A673 (cell line): ENCODE measurements at regions of chr7 and their contacts with region 1.

Region 1: DNA sequence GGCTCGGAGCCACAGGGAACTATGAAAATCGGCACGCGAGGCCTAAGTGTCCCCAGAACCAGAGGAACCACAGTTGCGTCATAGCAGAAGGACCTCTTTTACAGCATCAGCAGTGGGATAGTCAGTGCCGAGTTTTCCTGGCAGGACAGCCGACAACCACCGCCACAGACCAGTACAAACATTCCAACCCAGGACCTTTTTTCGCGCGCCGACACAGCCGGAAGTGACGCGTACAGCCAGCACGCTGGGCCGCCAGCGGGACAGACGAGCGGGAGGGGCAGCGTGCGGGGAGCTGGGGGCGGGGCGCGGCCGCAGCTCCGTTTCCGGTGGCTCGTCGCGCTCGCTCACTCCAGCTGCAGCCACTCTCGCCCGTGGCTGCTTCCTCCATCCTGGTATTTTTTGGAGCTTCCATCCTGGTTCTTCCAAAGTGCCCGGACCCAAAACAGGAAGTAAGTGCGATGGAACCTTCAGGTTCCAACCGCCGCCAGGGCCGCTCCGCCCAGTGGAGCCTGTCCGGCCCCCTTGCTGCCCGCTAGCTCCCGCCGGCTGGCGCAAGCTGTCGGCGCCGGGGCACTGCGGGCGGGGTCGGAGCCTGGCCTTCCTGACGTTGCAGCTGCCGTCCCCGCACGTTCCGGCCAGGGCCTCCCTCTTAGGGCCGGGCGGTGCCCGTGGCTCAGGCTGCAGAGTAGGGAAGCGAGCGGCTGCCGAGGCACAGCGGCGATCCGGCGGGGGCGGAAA is at the start of gene DMTF1:
- DNase-seq: peak; percentile 96
- H3K4me3 ChIP-seq: peak within 1 kb of the TSS; percentile 89
- H3K27ac ChIP-seq: peak within 1 kb of the TSS; percentile 99
- H3K4me1 ChIP-seq: peaks cover 11% of the 10 kb centered on the region
- H3K27me3 ChIP-seq: no peaks in the 10 kb centered on the region
- CTCF ChIP-seq: no peak
- total RNA-seq, gene DMTF1: 90.5 and 94.3 TPM in 2 replicates

Region 2: DNA sequence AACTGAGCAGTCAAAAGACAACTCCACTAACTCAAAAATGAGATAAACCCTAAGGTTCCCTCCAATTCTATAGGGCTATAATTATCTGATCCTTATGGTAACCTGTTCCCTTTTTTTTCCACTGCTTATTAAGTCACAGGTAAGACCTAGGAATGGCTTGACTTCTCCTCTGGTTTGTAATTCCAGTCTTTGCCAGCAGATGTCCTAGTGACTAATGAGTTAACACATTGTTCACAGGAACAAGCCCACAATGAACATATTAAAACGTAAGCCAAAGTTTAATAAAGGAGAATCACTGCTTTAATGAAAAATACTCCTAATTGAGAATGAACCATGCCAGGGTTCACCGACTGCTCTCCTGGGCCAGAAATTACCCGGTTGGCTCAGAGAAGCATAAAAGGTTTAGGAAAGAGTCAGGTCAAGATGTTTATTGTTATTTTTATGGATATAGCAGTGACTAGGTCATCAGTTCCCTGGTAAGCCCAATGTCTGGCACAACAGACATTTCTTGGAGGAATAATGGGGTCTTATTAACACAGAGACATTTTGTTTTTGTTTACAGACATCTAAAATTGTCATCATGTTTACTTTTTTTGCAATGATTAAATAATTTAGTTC is 213.0 kb before region 1 on chr7:
- CTCF ChIA-PET with region 1: interaction called, 4 read pairs
- POLR2A ChIA-PET with region 1: no interaction called
- intact Hi-C with region 1: loop called (anchors 1 kb)
- DNase-seq: peak; percentile 66
- H3K4me3 ChIP-seq: no peak overlapping the region
- H3K27ac ChIP-seq: no peak overlapping the region
- H3K4me1 ChIP-seq: no peaks in the 10 kb centered on the region
- H3K27me3 ChIP-seq: peaks cover 12% of the 10 kb centered on the region
- CTCF ChIP-seq: peak; percentile 71

Region 3: DNA sequence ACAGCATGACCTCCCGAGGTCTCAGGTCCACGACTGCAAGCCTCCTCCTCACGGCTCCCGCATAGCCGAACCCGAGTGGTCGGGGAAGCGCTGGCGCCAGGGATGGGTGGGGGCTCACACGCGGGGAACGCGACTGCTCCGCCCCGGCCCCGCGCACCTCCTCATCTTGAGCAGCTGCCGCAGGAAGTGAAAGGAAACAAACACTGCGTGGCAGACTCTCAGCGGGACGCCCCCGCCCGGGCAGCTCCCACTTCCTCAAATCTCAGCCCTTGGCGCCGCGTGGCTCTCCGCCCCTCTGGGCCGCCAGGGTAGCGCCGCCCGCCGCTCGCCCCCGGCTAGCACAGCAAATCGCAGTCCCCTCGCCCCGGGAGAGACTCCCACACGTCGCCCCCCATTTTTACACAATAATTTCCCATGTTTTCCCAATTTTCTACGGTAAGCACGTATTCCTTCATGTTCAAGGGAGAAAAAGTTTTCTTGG is 67.3 kb after region 1 on chr7 and contains the start of gene TMEM243:
- CTCF ChIA-PET with region 1: interaction called, 4 read pairs
- POLR2A ChIA-PET with region 1: interaction called, 3 read pairs
- intact Hi-C with region 1: loop called (anchors 2 kb)
- DNase-seq: peak; percentile 89
- H3K4me3 ChIP-seq: peak within 1 kb of the TSS; percentile 78
- H3K27ac ChIP-seq: peak within 1 kb of the TSS; percentile 77
- H3K4me1 ChIP-seq: peaks cover 24% of the 10 kb centered on the region
- H3K27me3 ChIP-seq: peaks cover 17% of the 10 kb centered on the region
- CTCF ChIP-seq: peak; percentile 41; the same call in 1 of the 2 replicates
- total RNA-seq, gene TMEM243: 24.5 and 25.8 TPM in 2 replicates